ENCODE measurements at regions of chr6 and their contacts with region 1.

Region 1: DNA sequence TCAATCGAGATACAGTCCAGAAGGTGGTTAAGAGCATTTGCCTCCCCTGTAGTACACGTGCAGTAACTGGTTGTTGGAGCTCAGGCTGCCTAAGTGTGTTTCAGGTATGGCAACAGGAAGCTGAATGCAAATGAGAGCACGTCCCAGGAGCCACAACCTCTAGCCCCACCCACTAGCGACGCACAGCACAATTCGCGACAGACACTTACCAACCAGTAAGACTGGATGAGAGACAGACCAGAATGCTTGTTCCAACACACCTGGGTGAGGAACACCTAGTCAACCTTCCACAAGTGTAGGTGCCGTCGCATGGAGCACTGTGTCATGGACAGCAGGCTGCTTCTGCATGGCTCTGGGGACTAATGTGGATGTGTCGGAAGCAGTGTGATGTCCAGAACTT is 7.2 kb upstream of the SERPINB1 start:
- DNase-seq: no peak
- ATAC-seq: no peak
- H3K4me3 ChIP-seq: no peak overlapping the region
- H3K27ac ChIP-seq: no peak overlapping the region
- H3K4me1 ChIP-seq: peaks cover 10% of the 10 kb centered on the region
- H3K27me3 ChIP-seq: no peaks in the 10 kb centered on the region
- CTCF ChIP-seq: no peak

Region 2: GRCh38 chr6:2441601-2442475 is 407.0 kb before region 1 on chr6:
- intact Hi-C with region 1: no loop called
- DNase-seq: no peak
- ATAC-seq: no peak
- H3K4me3 ChIP-seq: no peak overlapping the region
- H3K27ac ChIP-seq: no peak overlapping the region
- H3K4me1 ChIP-seq: no peaks in the 10 kb centered on the region
- H3K27me3 ChIP-seq: no peaks in the 10 kb centered on the region
- CTCF ChIP-seq: no peak

Region 3: DNA sequence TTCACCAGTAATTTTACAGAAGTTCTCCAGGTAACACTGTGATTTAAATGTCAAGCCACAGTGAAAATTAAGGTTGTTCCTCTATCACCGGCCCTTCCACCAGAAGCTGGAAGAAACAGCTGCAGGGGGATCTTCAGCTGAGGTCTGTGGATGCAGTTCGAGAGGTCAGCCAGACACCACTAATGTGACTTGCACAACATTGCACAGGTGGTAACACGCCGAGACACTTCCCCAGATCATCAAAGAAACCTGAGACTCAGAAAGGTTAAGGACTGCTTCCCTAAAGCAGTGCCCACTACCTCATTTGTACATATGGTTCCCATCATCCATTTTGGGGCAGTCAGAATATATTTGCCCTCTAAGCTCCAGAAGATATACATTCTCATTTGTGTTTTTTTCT is 62.3 kb after region 1 on chr6:
- intact Hi-C with region 1: loop called (anchors 5 kb)
- DNase-seq: no peak
- ATAC-seq: no peak
- H3K4me3 ChIP-seq: no peak overlapping the region
- H3K27ac ChIP-seq: no peak overlapping the region
- H3K4me1 ChIP-seq: no peaks in the 10 kb centered on the region
- H3K27me3 ChIP-seq: no peaks in the 10 kb centered on the region
- CTCF ChIP-seq: no peak